Naive thymus-derived CD8-positive, alpha-beta T cell (primary cell): ENCODE measurements at regions of chrX and their contacts with region 1.

Region 1: GRCh38 chrX:54182864-54183608 is at the start of gene FAM120C:
- DNase-seq: peak; percentile 43 to 82 (median 58)
- ATAC-seq: peak; percentile 70 to 74
- H3K4me3 Mint-ChIP-seq: peak within 1 kb of the TSS; percentile 79 to 92 (median 87)
- H3K27ac Mint-ChIP-seq: peak within 1 kb of the TSS; percentile 77 to 95 (median 88)
- H3K4me1 Mint-ChIP-seq: peaks cover 22 to 43% (median 42%) of the 10 kb centered on the region in 4 donors
- H3K27me3 Mint-ChIP-seq: no peaks in the 10 kb centered on the region
- polyA plus RNA-seq, gene FAM120C: 6.9 to 8.1 (median 7.2) TPM

Region 2: DNA sequence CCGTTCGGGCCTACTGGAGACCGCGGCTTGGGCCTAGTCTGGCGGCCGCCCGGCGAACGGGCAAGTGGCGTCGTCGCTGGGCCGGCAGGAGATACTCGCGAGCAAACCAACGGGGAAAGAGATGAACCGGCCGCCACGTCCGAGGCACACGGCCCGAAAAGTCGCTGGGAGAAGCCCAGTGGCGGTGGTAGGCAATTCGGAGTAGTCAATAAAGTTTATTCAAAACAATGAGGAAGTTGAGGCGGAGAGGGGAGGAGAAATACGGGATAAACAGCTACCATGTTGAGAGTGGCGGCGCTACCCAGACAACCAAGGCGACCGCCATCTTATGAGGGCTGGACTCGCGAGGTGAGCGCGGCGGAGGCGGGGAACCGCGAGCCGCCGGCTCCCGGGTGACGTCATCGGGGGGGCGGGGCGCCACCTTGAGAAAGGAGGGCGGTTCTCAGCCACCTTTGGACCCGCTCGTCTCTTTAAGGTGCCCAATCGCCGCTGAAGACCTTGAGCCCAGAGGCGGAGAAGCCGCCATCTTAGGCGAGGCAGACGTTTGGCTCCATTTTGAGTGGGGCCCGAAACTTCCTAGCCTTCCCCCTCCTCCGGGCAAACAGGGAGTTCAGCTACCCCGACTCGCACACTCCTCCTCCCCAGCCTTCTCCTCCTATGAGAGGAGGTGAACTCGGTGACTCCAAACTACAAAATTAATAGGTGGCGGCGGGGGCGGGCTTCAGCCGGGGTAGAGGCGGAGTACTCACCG is 138.7 kb before region 1 on chrX and contains the start of gene PHF8:
- POLR2A ChIA-PET with region 1: interaction called, 47 read pairs
- DNase-seq: peak; percentile 79 to 97 (median 94)
- ATAC-seq: peak; percentile 81 to 83
- H3K4me3 Mint-ChIP-seq: peak within 1 kb of the TSS; percentile 88 to 96 (median 92)
- H3K27ac Mint-ChIP-seq: peak within 1 kb of the TSS; percentile 93 to 99 (median 97)
- H3K4me1 Mint-ChIP-seq: peaks cover 4 to 21% (median 15%) of the 10 kb centered on the region in 4 donors
- H3K27me3 Mint-ChIP-seq: no peaks in the 10 kb centered on the region
- polyA plus RNA-seq, gene PHF8: 12.0 to 16.3 (median 13.1) TPM

Region 3: GRCh38 chrX:54439967-54440871 is 257.2 kb after region 1 on chrX and contains the start of gene TSR2:
- POLR2A ChIA-PET with region 1: interaction called, 12 read pairs
- DNase-seq: peak; percentile 61 to 86 (median 74)
- ATAC-seq: peak; percentile 96 to 97
- H3K4me3 Mint-ChIP-seq: peak within 1 kb of the TSS; percentile 89 to 99 (median 92)
- H3K27ac Mint-ChIP-seq: peak within 1 kb of the TSS; percentile 89 to 95 (median 94)
- H3K4me1 Mint-ChIP-seq: peaks cover 16 to 46% (median 35%) of the 10 kb centered on the region in 4 donors
- H3K27me3 Mint-ChIP-seq: no peaks in the 10 kb centered on the region
- polyA plus RNA-seq, gene TSR2: 65.8 to 83.4 (median 66.4) TPM

Region 4: GRCh38 chrX:54808605-54809483 is 625.8 kb after region 1 on chrX:
- POLR2A ChIA-PET with region 1: interaction called, 11 read pairs
- DNase-seq: peak; percentile 71 to 96 (median 88)
- ATAC-seq: peak; percentile 71 to 77
- H3K4me3 Mint-ChIP-seq: peak overlapping the region; percentile 91 to 99 (median 95)
- H3K27ac Mint-ChIP-seq: peak overlapping the region; percentile 90 to 99 (median 95)
- H3K4me1 Mint-ChIP-seq: peaks cover 13 to 27% (median 24%) of the 10 kb centered on the region in 4 donors
- H3K27me3 Mint-ChIP-seq: peaks cover 0 to 2% (median 0%) of the 10 kb centered on the region in 5 donors